ENCODE measurements at regions of chr15 and their contacts with region 1.

Region 1: GRCh38 chr15:40357723-40358470 is at the start of gene DISP2:
- DNase-seq: peak; percentile 80 to 97 (median 91)
- ATAC-seq: peak; percentile 94
- H3K4me3 ChIP-seq: peak within 1 kb of the TSS; percentile 63
- H3K4me3 Mint-ChIP-seq: peak within 1 kb of the TSS; percentile 75 to 90 (median 83)
- H3K27ac ChIP-seq: no peak within 1 kb of the TSS
- H3K27ac Mint-ChIP-seq: peak within 1 kb of the TSS in 2 of 9 donors; percentile 38 to 48
- H3K4me1 ChIP-seq: peaks cover 0 to 12% of the 10 kb centered on the region in 2 donors
- H3K4me1 Mint-ChIP-seq: peaks cover 7 to 15% (median 13%) of the 10 kb centered on the region in 7 donors
- H3K27me3 ChIP-seq: no peaks in the 10 kb centered on the region
- H3K27me3 Mint-ChIP-seq: peaks cover 0 to 30% (median 9%) of the 10 kb centered on the region in 5 donors
- total RNA-seq, gene DISP2: 0.05 to 0.51 (median 0.07) TPM in 4 of 5 experiments, not detected in the other

Region 2: DNA sequence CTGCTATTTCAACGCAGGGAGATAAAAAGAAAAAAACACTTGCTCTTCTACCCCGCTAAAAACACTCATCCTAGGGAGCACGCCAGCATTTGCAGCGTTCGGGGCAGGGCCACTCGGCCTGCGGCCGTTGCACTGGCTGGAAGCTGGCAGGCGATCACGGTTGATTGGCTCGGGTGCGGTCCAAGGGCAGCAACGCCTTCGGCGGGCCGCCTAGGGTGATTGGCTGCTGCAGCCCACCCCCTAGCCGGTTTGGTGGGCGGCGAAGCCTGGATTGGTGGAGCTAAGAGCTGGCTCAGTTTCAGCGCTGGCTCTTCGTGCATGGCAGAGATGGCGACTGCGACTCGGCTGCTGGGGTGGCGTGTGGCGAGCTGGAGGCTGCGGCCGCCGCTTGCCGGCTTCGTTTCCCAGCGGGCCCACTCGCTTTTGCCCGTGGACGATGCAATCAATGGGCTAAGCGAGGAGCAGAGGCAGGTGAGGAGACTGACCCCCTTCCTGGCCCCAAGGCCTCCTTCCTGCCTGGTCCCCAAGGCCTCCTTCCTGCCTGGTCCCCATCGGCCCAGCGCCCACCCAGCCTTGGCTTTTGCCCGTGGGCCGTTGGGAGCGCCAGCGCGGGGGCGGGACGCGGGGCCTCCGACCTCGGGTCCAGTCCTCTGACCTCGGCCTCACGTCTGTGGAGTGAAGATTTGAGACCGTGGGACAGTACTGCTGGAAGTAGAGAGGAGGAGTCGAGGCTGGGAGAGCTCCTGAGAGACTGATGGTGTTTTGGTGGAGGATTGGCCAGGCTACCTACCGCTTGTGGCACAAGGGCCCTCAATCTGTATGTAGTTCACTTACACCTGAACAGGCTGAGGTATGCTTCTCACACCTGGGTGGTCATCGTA is 47.8 kb after region 1 on chr15 and contains the start of gene IVD:
- CTCF ChIA-PET with region 1: no interaction called
- POLR2A ChIA-PET with region 1: no interaction called
- intact Hi-C with region 1: loop called in 1 of 2 experiments (anchors 1 kb)
- DNase-seq: peak; percentile 67 to 88 (median 79)
- ATAC-seq: peak; percentile 99
- H3K4me3 ChIP-seq: peak within 1 kb of the TSS; percentile 49
- H3K4me3 Mint-ChIP-seq: peak within 1 kb of the TSS; percentile 79 to 94 (median 92)
- H3K27ac ChIP-seq: peak within 1 kb of the TSS; percentile 70
- H3K27ac Mint-ChIP-seq: peak within 1 kb of the TSS; percentile 38 to 92 (median 90)
- H3K4me1 ChIP-seq: peaks cover 6 to 15% of the 10 kb centered on the region in 2 donors
- H3K4me1 Mint-ChIP-seq: peaks cover 9 to 49% (median 30%) of the 10 kb centered on the region in 7 donors
- H3K27me3 ChIP-seq: no peaks in the 10 kb centered on the region
- H3K27me3 Mint-ChIP-seq: no peaks in the 10 kb centered on the region
- total RNA-seq, gene IVD: 47.2 to 81.8 (median 64.7) TPM

Region 3: GRCh38 chr15:40694688-40695468 is 337.0 kb after region 1 on chr15 and contains the start of gene RAD51:
- CTCF ChIA-PET with region 1: no interaction called
- POLR2A ChIA-PET with region 1: no interaction called
- intact Hi-C with region 1: no loop called
- DNase-seq: peak; percentile 81 to 93 (median 92)
- ATAC-seq: peak; percentile 97
- H3K4me3 ChIP-seq: peak within 1 kb of the TSS; percentile 97
- H3K4me3 Mint-ChIP-seq: peak within 1 kb of the TSS; percentile 93 to 100 (median 95)
- H3K27ac ChIP-seq: peak within 1 kb of the TSS; percentile 91
- H3K27ac Mint-ChIP-seq: peak within 1 kb of the TSS; percentile 95 to 100 (median 99)
- H3K4me1 ChIP-seq: peaks cover 10% of the 10 kb centered on the region in 2 donors
- H3K4me1 Mint-ChIP-seq: peaks cover 14 to 42% (median 22%) of the 10 kb centered on the region in 7 donors
- H3K27me3 ChIP-seq: no peaks in the 10 kb centered on the region
- H3K27me3 Mint-ChIP-seq: no peaks in the 10 kb centered on the region
- total RNA-seq, gene RAD51: 0.51 to 51.5 (median 1.4) TPM